ENCODE measurements at regions of chr1 and their contacts with region 1.

Region 1: DNA sequence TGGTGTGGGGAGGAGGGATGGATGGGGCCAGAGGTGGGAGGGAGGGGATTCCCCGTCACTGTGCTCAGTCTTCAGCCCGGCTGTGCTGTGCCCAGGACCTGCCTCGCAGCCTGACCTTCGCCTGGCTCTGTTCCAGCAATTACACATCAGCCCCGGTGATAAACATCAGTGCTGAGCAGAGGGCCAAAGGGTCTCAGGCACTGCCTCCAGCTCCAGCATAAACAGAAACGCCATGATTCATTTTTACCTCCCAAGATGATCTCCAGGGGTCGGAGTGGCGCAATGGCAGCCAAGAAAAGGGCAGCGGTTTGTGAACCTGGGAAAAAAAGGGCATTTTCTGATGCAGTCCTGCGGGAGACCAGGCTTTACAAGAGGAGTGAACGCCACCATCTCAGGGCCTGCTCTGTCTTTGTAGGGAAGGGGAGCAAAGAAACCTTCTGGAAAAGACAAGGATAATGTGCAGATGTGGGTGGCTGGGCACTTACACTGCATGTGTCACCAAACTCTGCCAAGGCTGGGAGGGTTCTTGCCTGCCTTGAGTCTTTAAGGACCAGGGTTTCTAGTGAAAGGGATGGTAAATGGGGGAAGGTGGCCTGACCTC is 28.1 kb downstream of the SHISA4 start:
- DNase-seq: peak; percentile 61 to 66
- ATAC-seq: peak; percentile 60 to 73
- H3K4me3 ChIP-seq: no peak overlapping the region
- H3K27ac ChIP-seq: peak overlapping the region; percentile 49 to 78 (median 70)
- H3K4me1 ChIP-seq: peaks cover 44 to 46% of the 10 kb centered on the region in 2 donors
- H3K27me3 ChIP-seq: no peaks in the 10 kb centered on the region
- CTCF ChIP-seq: no peak
- POLR2A ChIP-seq: no peak

Region 2: GRCh38 chr1:201933840-201934430 is 17.2 kb after region 1 on chr1:
- in situ Hi-C with region 1: no loop called
- intact Hi-C with region 1: loop called (anchors 2 kb)
- DNase-seq: no peak
- ATAC-seq: no peak
- H3K4me3 ChIP-seq: no peak overlapping the region
- H3K27ac ChIP-seq: peak overlapping the region in 3 of 4 donors; percentile 16 to 49 (median 41)
- H3K4me1 ChIP-seq: peaks cover 2 to 13% of the 10 kb centered on the region in 2 donors
- H3K27me3 ChIP-seq: no peaks in the 10 kb centered on the region
- CTCF ChIP-seq: no peak
- POLR2A ChIP-seq: no peak

Measured in gastrocnemius medialis (tissue), 4 donors.